IMR-90 (cell line): ENCODE measurements at regions of chr7 and their contacts with region 1.

Region 1: GRCh38 chr7:28456044-28456443 is 43.7 kb downstream of the CREB5 start:
- DNase-seq: peak; percentile 78
- ATAC-seq: peak; percentile 96
- H3K4me3 ChIP-seq: no peak overlapping the region
- H3K27ac ChIP-seq: peak overlapping the region; percentile 83; the same call in 1 of the 2 replicates
- H3K4me1 ChIP-seq: peaks cover 10% of the 10 kb centered on the region
- H3K27me3 ChIP-seq: no peaks in the 10 kb centered on the region
- CTCF ChIP-seq: no peak
- POLR2A ChIP-seq: no peak
- RAD21 ChIP-seq: no peak

Region 2: GRCh38 chr7:26633557-26633956 is 1822.5 kb before region 1 on chr7:
- CTCF ChIA-PET with region 1: no interaction called
- POLR2A ChIA-PET with region 1: no interaction called
- dilution Hi-C with region 1: no loop called
- in situ Hi-C with region 1: no loop called
- intact Hi-C with region 1: no loop called
- DNase-seq: no peak
- ATAC-seq: no peak
- H3K4me3 ChIP-seq: no peak overlapping the region
- H3K27ac ChIP-seq: no peak overlapping the region
- H3K4me1 ChIP-seq: no peaks in the 10 kb centered on the region
- H3K27me3 ChIP-seq: peaks cover 2% of the 10 kb centered on the region; the same call in 1 of the 2 replicates
- CTCF ChIP-seq: no peak
- POLR2A ChIP-seq: no peak
- RAD21 ChIP-seq: no peak

Region 3: DNA sequence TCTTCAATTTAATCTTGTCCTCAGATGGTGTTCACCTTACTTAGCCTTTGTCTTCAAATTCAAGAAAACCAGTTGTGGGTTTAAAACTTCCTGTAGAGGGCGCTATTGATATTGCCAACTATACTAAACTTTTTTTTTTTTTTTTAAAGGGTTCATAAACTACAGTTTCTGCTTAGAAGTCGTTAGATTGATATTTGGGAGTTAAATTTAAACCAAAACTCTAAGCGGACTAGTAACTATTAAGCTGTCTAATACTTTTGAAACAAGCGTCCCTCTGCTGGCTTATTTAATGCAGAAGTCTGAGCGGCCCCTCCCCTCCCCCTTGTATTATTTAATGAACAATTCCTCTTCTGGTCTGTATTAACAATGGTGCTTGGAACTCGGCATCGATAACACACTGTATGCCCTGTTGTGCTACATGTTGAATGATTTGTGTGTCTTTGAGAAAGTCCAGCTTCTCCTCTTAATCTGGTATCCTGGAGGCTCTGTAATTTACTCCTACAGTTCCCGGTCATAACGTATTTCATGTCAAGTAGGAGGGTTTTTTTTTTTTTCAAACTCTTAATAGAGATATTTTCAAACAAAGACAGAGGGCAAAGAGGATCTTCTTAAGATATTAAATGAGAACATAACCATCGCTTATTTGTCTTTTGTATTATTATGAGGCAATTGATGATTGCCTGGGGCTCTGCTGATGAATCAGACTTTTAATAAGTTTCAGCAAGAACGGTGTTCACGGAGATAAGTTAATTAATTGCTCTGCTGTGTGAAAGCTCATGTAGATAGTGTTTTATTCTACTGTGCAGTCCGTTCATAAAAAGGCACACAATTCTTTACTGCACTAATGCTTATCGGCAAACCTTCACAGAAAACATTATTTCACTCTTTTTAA is 66.3 kb before region 1 on chr7:
- CTCF ChIA-PET with region 1: no interaction called
- POLR2A ChIA-PET with region 1: no interaction called
- dilution Hi-C with region 1: no loop called
- in situ Hi-C with region 1: no loop called
- intact Hi-C with region 1: no loop called
- DNase-seq: peak; percentile 79
- ATAC-seq: peak; percentile 75
- H3K4me3 ChIP-seq: peak overlapping the region; percentile 34; the same call in 1 of the 2 replicates
- H3K27ac ChIP-seq: no peak overlapping the region
- H3K4me1 ChIP-seq: 0 out of 2 replicates have a peak, but pooled peaks cover 2% of the 10 kb centered on the region
- H3K27me3 ChIP-seq: peaks cover 7% of the 10 kb centered on the region; the same call in 1 of the 2 replicates
- CTCF ChIP-seq: peak; percentile 80
- POLR2A ChIP-seq: no peak
- RAD21 ChIP-seq: peak; percentile 80

Region 4: DNA sequence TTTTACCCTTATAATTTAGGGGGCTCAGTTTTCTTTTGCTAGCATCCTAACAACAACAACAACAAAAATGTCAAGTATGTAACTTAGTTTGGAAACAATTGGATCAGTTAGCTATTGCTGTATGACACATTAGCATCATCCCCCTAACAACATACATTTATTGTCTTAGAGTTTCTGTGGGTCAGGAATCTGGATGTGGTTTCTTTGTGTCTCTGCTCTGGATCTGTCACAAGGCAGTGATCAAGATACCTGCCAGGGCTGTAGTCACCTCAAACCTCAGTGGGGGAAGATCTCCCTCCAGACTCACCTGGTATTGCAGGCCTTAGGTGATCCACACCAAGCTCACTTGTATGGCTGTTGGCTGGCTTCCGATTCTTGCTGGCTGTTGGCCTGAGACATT is 25.4 kb before region 1 on chr7:
- CTCF ChIA-PET with region 1: no interaction called
- POLR2A ChIA-PET with region 1: no interaction called
- dilution Hi-C with region 1: no loop called
- in situ Hi-C with region 1: no loop called
- intact Hi-C with region 1: loop called (anchors 1 kb)
- DNase-seq: no peak
- ATAC-seq: no peak
- H3K4me3 ChIP-seq: no peak overlapping the region
- H3K27ac ChIP-seq: no peak overlapping the region
- H3K4me1 ChIP-seq: peaks cover 2% of the 10 kb centered on the region; the same call in 1 of the 2 replicates
- H3K27me3 ChIP-seq: no peaks in the 10 kb centered on the region
- CTCF ChIP-seq: no peak
- POLR2A ChIP-seq: no peak
- RAD21 ChIP-seq: no peak

Region 5: GRCh38 chr7:29017713-29018112 is 561.7 kb after region 1 on chr7:
- CTCF ChIA-PET with region 1: no interaction called
- POLR2A ChIA-PET with region 1: no interaction called
- dilution Hi-C with region 1: no loop called
- in situ Hi-C with region 1: no loop called
- intact Hi-C with region 1: no loop called
- DNase-seq: peak; percentile 6
- ATAC-seq: no peak
- H3K4me3 ChIP-seq: no peak overlapping the region
- H3K27ac ChIP-seq: no peak overlapping the region
- H3K4me1 ChIP-seq: no peaks in the 10 kb centered on the region
- H3K27me3 ChIP-seq: no peaks in the 10 kb centered on the region; the same call in 1 of the 2 replicates
- CTCF ChIP-seq: no peak
- POLR2A ChIP-seq: no peak
- RAD21 ChIP-seq: no peak